Activated T-helper 2 cell treated with anti-CD3 and anti-CD28 coated beads, Interferon-gamma antibody, Interleukin-2, Interleukin-4, amounts not matched to agents 10 μg/mL and 5 μg/mL and 100 μg/mL, durations not matched to agents 14 hours and 24 hours and 36 hours (primary cell): ENCODE measurements at regions of chr2 and their contacts with region 1.

Region 1: GRCh38 chr2:69601179-69601612 is 42.3 kb downstream of the AAK1 start:
- DNase-seq: no peak
- H3K4me3 Mint-ChIP-seq: no peak overlapping the region
- H3K27ac Mint-ChIP-seq: peak overlapping the region; percentile 87
- H3K4me1 Mint-ChIP-seq: peaks cover 74% of the 10 kb centered on the region
- H3K27me3 Mint-ChIP-seq: no peaks in the 10 kb centered on the region

Region 2: GRCh38 chr2:69565431-69565839 is 35.8 kb before region 1 on chr2:
- intact Hi-C with region 1: loop called (anchors 5 kb)
- DNase-seq: peak; percentile 50
- H3K4me3 Mint-ChIP-seq: no peak overlapping the region
- H3K27ac Mint-ChIP-seq: no peak overlapping the region
- H3K4me1 Mint-ChIP-seq: peaks cover 61% of the 10 kb centered on the region
- H3K27me3 Mint-ChIP-seq: no peaks in the 10 kb centered on the region

Region 3: DNA sequence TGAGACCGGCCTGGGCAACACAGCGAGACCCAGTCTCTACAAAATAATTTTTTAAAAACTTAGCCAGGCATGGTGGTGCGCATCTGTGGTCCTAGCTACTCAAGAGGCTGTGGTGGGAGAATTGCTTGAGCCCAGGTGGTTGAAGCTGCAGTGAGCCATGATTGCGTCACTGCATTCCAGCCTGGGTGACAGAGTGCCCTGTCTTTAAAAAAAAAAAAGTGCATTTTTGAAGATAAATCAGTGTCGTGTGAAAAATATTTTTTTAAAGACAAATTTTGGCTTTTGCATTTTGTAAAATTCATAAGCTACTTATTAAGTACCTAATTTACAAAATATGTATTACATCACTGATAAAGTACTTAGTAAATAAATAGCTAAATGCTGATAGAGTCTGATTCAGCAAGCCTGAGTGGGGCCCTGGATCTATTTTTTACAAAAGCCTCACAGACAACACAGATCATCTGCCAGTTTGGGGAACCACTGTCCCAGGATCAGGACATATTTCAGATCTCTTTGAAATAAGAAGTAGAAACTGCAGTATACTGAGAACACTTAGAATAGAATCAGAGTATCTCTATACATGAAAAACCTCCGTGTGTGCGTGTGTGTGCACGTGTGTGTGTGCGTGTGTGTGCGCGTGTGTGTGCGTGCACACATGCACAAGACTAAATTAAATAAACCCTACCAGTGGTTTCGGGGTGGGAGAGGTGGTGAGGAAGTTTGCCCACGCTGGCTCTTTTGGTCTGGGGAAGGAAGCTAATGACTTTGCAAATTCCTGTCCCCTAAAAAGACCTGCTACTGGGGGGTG is 19.2 kb before region 1 on chr2:
- intact Hi-C with region 1: loop called (anchors 1 kb)
- DNase-seq: no peak
- H3K4me3 Mint-ChIP-seq: no peak overlapping the region
- H3K27ac Mint-ChIP-seq: no peak overlapping the region
- H3K4me1 Mint-ChIP-seq: peaks cover 69% of the 10 kb centered on the region
- H3K27me3 Mint-ChIP-seq: no peaks in the 10 kb centered on the region

Region 4: DNA sequence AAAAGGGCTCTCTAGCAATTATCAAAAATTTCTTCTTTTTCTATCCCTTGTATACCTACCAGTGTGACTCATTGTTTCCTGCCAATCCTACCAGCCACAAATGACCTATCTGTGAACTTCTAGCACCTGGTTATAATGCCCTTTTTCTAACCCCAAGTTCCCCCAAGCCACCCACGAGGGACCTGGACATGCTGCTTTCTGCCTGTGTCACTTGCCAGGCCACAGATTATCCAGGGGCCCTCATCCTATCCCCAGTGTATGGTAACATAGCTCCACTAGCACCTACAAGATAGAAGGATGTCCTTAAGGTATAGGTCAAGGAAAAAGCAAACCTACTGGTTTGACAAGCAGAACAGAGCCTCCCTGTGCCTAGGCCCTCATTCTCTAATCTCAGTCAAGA is 15.6 kb after region 1 on chr2:
- intact Hi-C with region 1: loop called (anchors 1 kb)
- DNase-seq: no peak
- H3K4me3 Mint-ChIP-seq: peak overlapping the region; percentile 3
- H3K27ac Mint-ChIP-seq: peak overlapping the region; percentile 31
- H3K4me1 Mint-ChIP-seq: peaks cover 29% of the 10 kb centered on the region
- H3K27me3 Mint-ChIP-seq: no peaks in the 10 kb centered on the region

Region 5: DNA sequence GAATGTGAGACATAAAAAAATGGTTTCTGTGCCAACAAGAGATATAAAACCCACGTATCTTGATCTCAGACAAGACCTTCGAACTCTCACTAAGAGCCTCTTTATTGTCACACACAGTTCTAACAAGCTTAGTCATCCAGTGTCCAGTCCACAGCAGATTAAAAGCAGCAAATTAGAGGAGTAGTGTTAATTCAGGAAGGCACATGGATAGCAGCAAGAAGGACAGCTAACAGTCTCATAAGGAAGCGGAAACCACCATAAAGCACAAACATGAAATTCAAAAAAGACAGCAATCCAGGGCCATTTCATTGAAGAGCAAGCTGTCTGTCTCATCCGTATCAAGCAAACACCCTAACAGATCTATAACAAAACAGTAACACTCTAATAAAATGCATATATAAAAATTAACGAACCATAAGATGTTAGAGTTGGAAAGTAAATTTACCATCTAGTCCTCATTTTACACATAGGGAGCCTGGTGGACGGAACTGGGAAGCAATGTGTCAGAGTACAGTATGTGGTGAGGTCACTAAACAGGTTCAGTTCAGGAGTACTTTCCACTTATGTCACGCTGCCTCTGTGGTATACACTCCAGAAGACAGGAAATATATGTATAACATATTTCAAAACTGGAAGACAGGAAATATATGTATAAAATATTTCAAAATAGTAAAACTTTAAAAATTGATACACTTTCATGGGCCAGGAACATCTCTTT is 24.0 kb after region 1 on chr2:
- intact Hi-C with region 1: loop called (anchors 1 kb)
- DNase-seq: no peak
- H3K4me3 Mint-ChIP-seq: no peak overlapping the region
- H3K27ac Mint-ChIP-seq: no peak overlapping the region
- H3K4me1 Mint-ChIP-seq: peaks cover 15% of the 10 kb centered on the region
- H3K27me3 Mint-ChIP-seq: no peaks in the 10 kb centered on the region

Region 6: DNA sequence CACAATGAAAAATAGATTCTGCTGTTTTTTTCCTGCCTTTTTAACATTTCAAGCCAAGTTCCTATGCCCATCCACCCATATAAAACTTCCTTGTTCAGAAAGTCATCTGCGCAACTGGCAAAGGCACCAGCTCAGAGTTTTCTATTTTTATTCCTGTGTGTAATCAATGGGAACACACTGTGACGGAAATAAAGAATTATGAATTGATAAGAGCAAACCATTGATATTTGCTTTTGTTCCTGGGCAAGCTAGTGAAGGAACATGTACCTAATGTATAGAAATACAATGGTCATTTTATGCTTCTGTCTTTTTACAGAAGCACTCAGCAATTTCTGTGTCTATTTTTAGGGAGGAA is 73.1 kb after region 1 on chr2:
- intact Hi-C with region 1: loop called (anchors 2 kb)
- DNase-seq: no peak
- H3K4me3 Mint-ChIP-seq: no peak overlapping the region
- H3K27ac Mint-ChIP-seq: no peak overlapping the region
- H3K4me1 Mint-ChIP-seq: peaks cover 25% of the 10 kb centered on the region
- H3K27me3 Mint-ChIP-seq: no peaks in the 10 kb centered on the region

Region 7: GRCh38 chr2:69770193-69771146 is 169.3 kb after region 1 on chr2:
- intact Hi-C with region 1: loop called (anchors 2 kb)
- DNase-seq: peak; percentile 33
- H3K4me3 Mint-ChIP-seq: peak overlapping the region; percentile 6
- H3K27ac Mint-ChIP-seq: peak overlapping the region; percentile 69
- H3K4me1 Mint-ChIP-seq: peaks cover 80% of the 10 kb centered on the region
- H3K27me3 Mint-ChIP-seq: no peaks in the 10 kb centered on the region